ENCODE measurements at regions of chr19 and their contacts with region 1.

Region 1: GRCh38 chr19:1863726-1864480 is 524 bp upstream of the KLF16 start:
- DNase-seq: peak; percentile 95
- ATAC-seq: peak; percentile 73
- H3K4me3 Mint-ChIP-seq: peak overlapping the region; percentile 75
- H3K27ac Mint-ChIP-seq: peak overlapping the region; percentile 85
- H3K4me1 Mint-ChIP-seq: peaks cover 53% of the 10 kb centered on the region
- H3K27me3 Mint-ChIP-seq: no peaks in the 10 kb centered on the region

Region 2: GRCh38 chr19:1875646-1876495 is 12.0 kb after region 1 on chr19:
- CTCF ChIA-PET with region 1: interaction called, 38 read pairs
- POLR2A ChIA-PET with region 1: interaction called, 9 read pairs
- DNase-seq: peak; percentile 93
- ATAC-seq: peak; percentile 86
- H3K4me3 Mint-ChIP-seq: peak overlapping the region; percentile 95
- H3K27ac Mint-ChIP-seq: peak overlapping the region; percentile 98
- H3K4me1 Mint-ChIP-seq: peaks cover 39% of the 10 kb centered on the region
- H3K27me3 Mint-ChIP-seq: no peaks in the 10 kb centered on the region

Region 3: GRCh38 chr19:1884719-1885334 is 20.9 kb after region 1 on chr19:
- CTCF ChIA-PET with region 1: interaction called, 22 read pairs
- POLR2A ChIA-PET with region 1: interaction called, 7 read pairs
- DNase-seq: no peak
- ATAC-seq: peak; percentile 9
- H3K4me3 Mint-ChIP-seq: peak overlapping the region; percentile 93
- H3K27ac Mint-ChIP-seq: peak overlapping the region; percentile 95
- H3K4me1 Mint-ChIP-seq: peaks cover 50% of the 10 kb centered on the region
- H3K27me3 Mint-ChIP-seq: no peaks in the 10 kb centered on the region

Region 4: DNA sequence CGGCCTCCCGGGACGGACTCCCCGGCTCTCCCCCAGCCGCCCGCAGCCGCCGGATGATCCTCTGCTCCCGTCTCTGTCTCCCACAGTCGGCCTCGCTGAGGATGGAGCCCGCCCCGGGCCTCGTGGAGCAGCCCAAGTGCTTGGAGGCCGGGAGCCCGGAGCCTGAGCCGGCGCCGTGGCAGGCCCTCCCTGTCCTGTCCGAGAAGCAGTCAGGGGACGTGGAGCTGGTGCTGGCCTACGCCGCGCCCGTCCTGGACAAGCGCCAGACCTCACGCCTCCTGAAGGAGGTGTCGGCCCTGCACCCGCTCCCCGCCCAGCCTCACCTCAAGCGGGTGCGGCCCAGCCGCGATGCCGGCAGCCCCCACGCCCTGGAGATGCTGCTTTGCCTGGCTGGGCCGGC is 48.1 kb after region 1 on chr19:
- CTCF ChIA-PET with region 1: no interaction called
- POLR2A ChIA-PET with region 1: no interaction called
- DNase-seq: no peak
- ATAC-seq: no peak
- H3K4me3 Mint-ChIP-seq: no peak overlapping the region
- H3K27ac Mint-ChIP-seq: no peak overlapping the region
- H3K4me1 Mint-ChIP-seq: peaks cover 23% of the 10 kb centered on the region
- H3K27me3 Mint-ChIP-seq: no peaks in the 10 kb centered on the region

Measured in activated CD8-positive, alpha-beta T cell treated with anti-CD3 and anti-CD28 coated beads, Interleukin-2, amount 10 ng/mL, durations not matched to agents 7 days and 5 days (primary cell).